Ascending aorta (tissue), 2 donors: ENCODE measurements at regions of chr7 and their contacts with region 1.

Region 1: GRCh38 chr7:16982640-16983350 is 101.0 kb upstream of the AGR3 start:
- DNase-seq: no peak
- H3K4me3 ChIP-seq: no peak overlapping the region
- H3K27ac ChIP-seq: no peak overlapping the region
- H3K4me1 ChIP-seq: peaks cover 0 to 7% of the 10 kb centered on the region in 2 donors
- H3K27me3 ChIP-seq: no peaks in the 10 kb centered on the region
- CTCF ChIP-seq: peak; percentile 52 to 86 (median 73)

Region 2: GRCh38 chr7:16999541-17000267 is 16.9 kb after region 1 on chr7:
- intact Hi-C with region 1: no loop called
- DNase-seq: no peak
- H3K4me3 ChIP-seq: no peak overlapping the region
- H3K27ac ChIP-seq: no peak overlapping the region
- H3K4me1 ChIP-seq: no peaks in the 10 kb centered on the region
- H3K27me3 ChIP-seq: no peaks in the 10 kb centered on the region
- CTCF ChIP-seq: no peak

Region 3: GRCh38 chr7:17095001-17095574 is 112.3 kb after region 1 on chr7:
- intact Hi-C with region 1: no loop called
- DNase-seq: no peak
- H3K4me3 ChIP-seq: no peak overlapping the region
- H3K27ac ChIP-seq: no peak overlapping the region
- H3K4me1 ChIP-seq: no peaks in the 10 kb centered on the region
- H3K27me3 ChIP-seq: no peaks in the 10 kb centered on the region
- CTCF ChIP-seq: no peak

Region 4: GRCh38 chr7:17530741-17531417 is 548.1 kb after region 1 on chr7:
- intact Hi-C with region 1: loop called (anchors 5 kb)
- DNase-seq: no peak
- H3K4me3 ChIP-seq: no peak overlapping the region
- H3K27ac ChIP-seq: no peak overlapping the region
- H3K4me1 ChIP-seq: no peaks in the 10 kb centered on the region
- H3K27me3 ChIP-seq: no peaks in the 10 kb centered on the region
- CTCF ChIP-seq: peak in 1 of 3 experiments; percentile 26

Region 5: DNA sequence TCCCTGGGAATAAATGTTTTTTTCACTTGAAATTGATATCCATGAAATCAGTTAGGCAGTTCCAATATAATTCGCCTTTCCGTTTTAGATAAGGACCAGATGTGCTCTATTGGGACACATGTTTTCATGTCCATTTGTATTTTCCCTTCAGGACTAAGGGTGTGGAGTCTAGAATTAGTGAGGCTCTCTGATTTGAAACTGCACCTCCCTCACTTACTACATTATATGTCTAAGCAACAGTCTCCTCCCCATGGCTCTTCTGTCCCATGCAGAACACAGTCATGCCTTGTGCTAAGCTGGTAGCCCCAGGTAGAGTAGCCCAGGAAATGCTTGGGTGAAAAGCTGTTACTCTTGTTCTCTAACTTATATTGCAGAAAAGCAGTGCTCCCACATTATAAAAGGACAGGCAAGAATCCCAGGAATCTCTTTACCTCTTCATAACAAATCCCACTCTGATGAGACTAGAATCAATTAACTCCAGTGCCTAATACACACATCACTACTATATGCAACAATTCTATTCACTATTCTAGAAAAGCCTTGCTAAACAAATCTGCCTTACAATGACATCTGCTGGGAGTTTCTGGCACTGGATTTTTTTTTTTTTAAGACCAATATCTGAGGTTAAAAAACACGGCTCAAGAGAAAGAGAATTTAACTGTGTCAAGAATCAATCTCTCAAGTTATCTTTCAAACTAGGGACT is 663.6 kb after region 1 on chr7:
- intact Hi-C with region 1: loop called (anchors 5 kb)
- DNase-seq: no peak
- H3K4me3 ChIP-seq: no peak overlapping the region
- H3K27ac ChIP-seq: no peak overlapping the region
- H3K4me1 ChIP-seq: peaks cover 0 to 4% of the 10 kb centered on the region in 2 donors
- H3K27me3 ChIP-seq: no peaks in the 10 kb centered on the region
- CTCF ChIP-seq: peak in 2 of 3 experiments; percentile 22 to 35